ENCODE measurements at regions of chr13 and their contacts with region 1.

Region 1: DNA sequence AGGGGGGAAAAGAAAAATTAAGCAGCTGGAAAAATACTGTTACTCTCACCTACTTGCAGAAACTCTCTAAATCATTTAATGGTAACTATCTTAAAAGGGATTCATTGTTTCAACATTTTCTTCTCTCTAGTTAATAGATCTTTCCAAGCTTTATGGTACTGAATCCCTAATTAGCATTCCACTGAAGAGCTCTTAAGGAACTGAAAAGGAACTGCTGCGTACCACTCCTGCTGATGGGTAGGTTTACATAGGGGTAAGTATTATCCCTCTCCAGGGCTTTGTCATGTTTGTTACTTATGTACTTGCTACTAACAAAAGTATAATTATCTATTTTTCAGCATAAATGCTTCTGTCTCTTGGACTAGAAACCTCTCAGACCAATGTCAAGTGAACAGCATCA is 12.5 kb downstream of the TEX30 start:
- DNase-seq: no peak
- ATAC-seq: no peak
- H3K4me3 ChIP-seq: no peak overlapping the region
- H3K27ac ChIP-seq: no peak overlapping the region
- H3K4me1 ChIP-seq: no peaks in the 10 kb centered on the region
- H3K27me3 ChIP-seq: no peaks in the 10 kb centered on the region
- CTCF ChIP-seq: no peak

Region 2: DNA sequence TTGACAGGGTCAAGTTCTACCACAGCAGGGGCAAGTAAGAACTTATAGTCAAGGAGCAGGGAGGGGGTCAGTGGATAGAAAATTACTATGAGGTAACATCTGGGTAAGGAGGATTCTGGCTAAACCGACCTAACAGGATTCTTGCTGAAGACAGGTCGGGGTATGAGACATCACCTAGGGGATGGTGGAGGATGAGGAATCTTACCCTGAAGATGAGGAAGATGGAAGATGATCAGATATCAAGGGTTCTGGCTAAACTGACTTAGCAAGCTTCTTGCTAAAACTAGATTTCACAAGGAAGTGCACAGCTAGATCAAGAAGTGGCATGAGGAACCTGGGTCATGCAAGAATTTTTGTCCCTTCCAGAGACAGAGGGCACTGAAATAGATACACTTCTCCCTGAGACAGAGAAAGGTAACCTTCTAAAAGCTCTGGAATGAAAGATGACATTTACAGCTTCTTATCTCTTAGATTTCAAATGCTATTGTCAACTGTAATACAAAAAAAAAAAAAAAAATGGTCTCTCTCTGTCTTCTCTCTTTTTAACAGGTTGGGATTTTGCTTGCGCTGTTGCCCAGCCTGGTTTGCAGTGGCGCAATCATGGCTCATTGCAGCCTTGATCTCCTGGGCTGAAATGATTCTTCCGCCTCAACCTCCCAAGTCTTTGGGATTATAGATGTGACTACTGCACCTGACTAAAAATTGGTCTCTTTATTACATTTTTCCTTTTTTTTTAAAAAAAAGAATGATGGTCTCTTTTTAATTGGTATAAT is 56.6 kb before region 1 on chr13:
- CTCF ChIA-PET with region 1: interaction called, 12 read pairs
- POLR2A ChIA-PET with region 1: no interaction called
- in situ Hi-C with region 1: no loop called
- intact Hi-C with region 1: no loop called
- DNase-seq: no peak
- ATAC-seq: no peak
- H3K4me3 ChIP-seq: no peak overlapping the region
- H3K27ac ChIP-seq: no peak overlapping the region
- H3K4me1 ChIP-seq: no peaks in the 10 kb centered on the region
- H3K27me3 ChIP-seq: no peaks in the 10 kb centered on the region
- CTCF ChIP-seq: no peak

Measured in Panc1 (cell line).